ENCODE measurements at regions of chr5 and their contacts with region 1.

Region 1: DNA sequence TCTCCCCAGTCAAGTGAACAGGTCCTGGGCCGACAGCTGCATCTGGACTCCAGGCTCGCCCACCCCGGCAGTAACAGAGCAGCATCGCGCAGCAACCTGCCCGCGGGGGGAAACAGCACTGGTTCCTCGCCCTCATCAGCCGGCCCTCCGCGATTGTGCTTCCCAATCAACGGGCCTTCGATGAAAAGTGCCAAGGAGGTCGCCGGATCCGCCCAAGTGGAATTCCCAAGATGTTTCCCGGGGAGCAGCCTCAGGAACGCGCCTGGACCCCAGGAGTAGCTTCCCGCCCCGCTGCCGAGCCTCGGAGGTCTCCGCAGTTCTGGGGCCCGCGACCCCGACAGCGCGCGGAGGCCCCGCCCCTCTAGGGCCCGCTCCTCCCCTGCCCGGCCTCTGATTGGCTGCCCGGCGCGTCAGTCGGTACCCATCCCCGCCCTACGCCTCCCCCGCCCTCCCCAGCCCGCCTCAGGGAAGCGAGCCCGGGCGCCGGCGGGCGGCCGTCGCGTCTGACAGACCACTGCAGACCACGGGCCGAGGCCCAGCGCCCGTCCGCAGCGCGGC is at the start of gene OTULINL:
- DNase-seq: peak; percentile 91
- H3K4me3 Mint-ChIP-seq: peak within 1 kb of the TSS; percentile 75
- H3K27ac Mint-ChIP-seq: peak within 1 kb of the TSS; percentile 70
- H3K4me1 Mint-ChIP-seq: peaks cover 26% of the 10 kb centered on the region
- H3K27me3 Mint-ChIP-seq: peaks cover 2% of the 10 kb centered on the region
- total RNA-seq, gene OTULINL: 9.1 to 10.6 TPM

Region 2: DNA sequence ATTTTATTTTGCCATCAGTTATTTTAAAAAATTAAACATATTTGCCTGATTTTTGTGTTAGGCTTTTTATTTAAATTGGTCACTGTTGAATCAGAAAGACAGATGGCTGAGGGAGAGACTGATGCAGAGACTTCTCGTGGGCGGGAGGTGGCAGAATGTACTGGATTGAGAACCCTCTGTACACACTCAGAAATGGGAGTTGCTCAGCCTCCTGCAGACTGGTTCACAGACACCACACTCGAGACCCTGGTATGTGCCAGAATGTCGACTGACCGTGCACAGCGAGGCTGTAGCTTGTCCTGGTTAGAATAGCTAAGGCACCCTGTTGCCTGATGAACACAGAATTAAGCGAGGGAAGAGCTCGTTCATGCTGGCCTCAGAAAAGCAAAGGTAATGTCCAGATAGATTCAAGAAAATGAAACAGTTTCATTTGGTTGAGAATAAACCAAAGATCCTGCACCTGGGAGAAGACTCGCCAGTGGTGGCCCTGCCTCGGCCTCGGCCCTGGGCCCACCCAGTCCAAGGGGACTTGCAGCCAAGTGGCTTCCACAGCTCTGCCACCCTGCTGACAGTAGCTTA is 71.2 kb before region 1 on chr5:
- CTCF ChIA-PET with region 1: no interaction called
- intact Hi-C with region 1: no loop called
- DNase-seq: no peak
- H3K4me3 Mint-ChIP-seq: no peak overlapping the region
- H3K27ac Mint-ChIP-seq: no peak overlapping the region
- H3K4me1 Mint-ChIP-seq: no peaks in the 10 kb centered on the region
- H3K27me3 Mint-ChIP-seq: no peaks in the 10 kb centered on the region

Region 3: GRCh38 chr5:14595189-14595588 is 13.8 kb after region 1 on chr5:
- CTCF ChIA-PET with region 1: interaction called, 3 read pairs
- intact Hi-C with region 1: loop called (anchors 1 kb)
- DNase-seq: peak; percentile 51
- H3K4me3 Mint-ChIP-seq: peak overlapping the region; percentile 68
- H3K27ac Mint-ChIP-seq: peak overlapping the region; percentile 90
- H3K4me1 Mint-ChIP-seq: peaks cover 84% of the 10 kb centered on the region
- H3K27me3 Mint-ChIP-seq: no peaks in the 10 kb centered on the region

Region 4: GRCh38 chr5:14655146-14655741 is 73.8 kb after region 1 on chr5:
- CTCF ChIA-PET with region 1: no interaction called
- intact Hi-C with region 1: loop called (anchors 2 kb)
- DNase-seq: no peak
- H3K4me3 Mint-ChIP-seq: no peak overlapping the region
- H3K27ac Mint-ChIP-seq: no peak overlapping the region
- H3K4me1 Mint-ChIP-seq: peaks cover 39% of the 10 kb centered on the region
- H3K27me3 Mint-ChIP-seq: peaks cover 6% of the 10 kb centered on the region

Measured in activated naive CD4-positive, alpha-beta T cell treated with anti-CD3 and anti-CD28 coated beads for 36 hours (primary cell).